Naive thymus-derived CD8-positive, alpha-beta T cell (primary cell): ENCODE measurements at regions of chr14 and their contacts with region 1.

Region 1: GRCh38 chr14:65575389-65575788 is 162.9 kb downstream of the FUT8 start:
- DNase-seq: no peak
- ATAC-seq: no peak
- H3K4me3 Mint-ChIP-seq: no peak overlapping the region
- H3K27ac Mint-ChIP-seq: no peak overlapping the region
- H3K4me1 Mint-ChIP-seq: peaks cover 11 to 42% (median 28%) of the 10 kb centered on the region in 4 donors
- H3K27me3 Mint-ChIP-seq: no peaks in the 10 kb centered on the region

Region 2: GRCh38 chr14:65530179-65530578 is 45.2 kb before region 1 on chr14:
- POLR2A ChIA-PET with region 1: interaction called, 10 read pairs
- DNase-seq: no peak
- ATAC-seq: no peak
- H3K4me3 Mint-ChIP-seq: peak overlapping the region in 1 of 10 donors; percentile 26
- H3K27ac Mint-ChIP-seq: no peak overlapping the region
- H3K4me1 Mint-ChIP-seq: peaks cover 12 to 36% (median 25%) of the 10 kb centered on the region in 4 donors
- H3K27me3 Mint-ChIP-seq: no peaks in the 10 kb centered on the region

Region 3: GRCh38 chr14:65594153-65594881 is 18.9 kb after region 1 on chr14:
- POLR2A ChIA-PET with region 1: no interaction called
- DNase-seq: no peak
- ATAC-seq: no peak
- H3K4me3 Mint-ChIP-seq: peak overlapping the region in 1 of 10 donors; percentile 26
- H3K27ac Mint-ChIP-seq: no peak overlapping the region
- H3K4me1 Mint-ChIP-seq: peaks cover 0 to 16% (median 4%) of the 10 kb centered on the region in 4 donors
- H3K27me3 Mint-ChIP-seq: no peaks in the 10 kb centered on the region